ENCODE measurements at regions of chr4 and their contacts with region 1.

Region 1: DNA sequence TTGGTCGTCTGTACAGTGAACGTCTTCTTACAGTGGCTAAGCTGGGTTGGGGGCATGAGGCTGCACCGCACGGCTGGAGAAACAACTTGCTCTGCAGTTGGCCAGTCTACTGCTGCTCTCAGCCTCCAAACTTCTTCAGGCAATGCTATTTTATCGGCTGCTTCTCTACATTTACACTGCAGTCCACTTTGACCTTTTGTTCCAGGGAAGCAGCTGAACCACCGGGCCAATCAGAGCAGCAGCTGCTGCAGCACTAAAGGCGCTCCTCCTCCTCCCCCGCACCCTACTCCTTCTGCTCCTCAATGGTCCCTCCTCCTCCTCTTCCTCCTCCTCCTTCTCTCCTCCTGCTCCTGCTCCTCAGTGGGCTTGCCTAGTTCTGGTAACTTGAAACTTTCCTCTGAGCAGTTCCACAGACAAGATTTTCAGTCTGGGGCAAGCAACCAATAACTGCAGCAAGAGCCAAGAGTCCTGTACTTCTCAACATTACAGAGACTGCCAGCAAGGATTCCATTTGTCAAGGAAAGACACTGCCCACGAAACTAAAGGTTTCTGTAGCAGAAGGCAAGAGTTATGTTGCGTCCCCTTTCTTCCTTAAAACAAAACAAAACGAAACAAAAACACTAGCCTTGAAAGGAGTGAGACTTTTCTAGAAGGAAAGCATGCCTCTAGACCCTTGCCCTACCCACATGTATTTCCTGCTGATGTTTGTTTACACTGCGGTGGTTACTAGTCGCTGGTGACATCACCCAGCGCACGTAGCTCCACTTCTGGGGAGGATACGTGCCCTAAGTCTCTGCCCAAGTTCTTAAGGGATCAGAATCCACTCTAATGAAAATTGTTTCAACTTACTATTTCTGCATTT is 125.7 kb upstream of the NAP1L5 start:
- DNase-seq: peak; percentile 23 to 90 (median 84)
- ATAC-seq: peak; percentile 96
- H3K4me3 ChIP-seq: peak overlapping the region; percentile 62
- H3K4me3 Mint-ChIP-seq: peak overlapping the region; percentile 88 to 99 (median 96)
- H3K27ac ChIP-seq: peak overlapping the region; percentile 83
- H3K27ac Mint-ChIP-seq: peak overlapping the region; percentile 88 to 99 (median 98)
- H3K4me1 ChIP-seq: peaks cover 0 to 13% of the 10 kb centered on the region in 2 donors
- H3K4me1 Mint-ChIP-seq: peaks cover 0 to 46% (median 37%) of the 10 kb centered on the region in 7 donors
- H3K27me3 ChIP-seq: no peaks in the 10 kb centered on the region
- H3K27me3 Mint-ChIP-seq: no peaks in the 10 kb centered on the region

Region 2: DNA sequence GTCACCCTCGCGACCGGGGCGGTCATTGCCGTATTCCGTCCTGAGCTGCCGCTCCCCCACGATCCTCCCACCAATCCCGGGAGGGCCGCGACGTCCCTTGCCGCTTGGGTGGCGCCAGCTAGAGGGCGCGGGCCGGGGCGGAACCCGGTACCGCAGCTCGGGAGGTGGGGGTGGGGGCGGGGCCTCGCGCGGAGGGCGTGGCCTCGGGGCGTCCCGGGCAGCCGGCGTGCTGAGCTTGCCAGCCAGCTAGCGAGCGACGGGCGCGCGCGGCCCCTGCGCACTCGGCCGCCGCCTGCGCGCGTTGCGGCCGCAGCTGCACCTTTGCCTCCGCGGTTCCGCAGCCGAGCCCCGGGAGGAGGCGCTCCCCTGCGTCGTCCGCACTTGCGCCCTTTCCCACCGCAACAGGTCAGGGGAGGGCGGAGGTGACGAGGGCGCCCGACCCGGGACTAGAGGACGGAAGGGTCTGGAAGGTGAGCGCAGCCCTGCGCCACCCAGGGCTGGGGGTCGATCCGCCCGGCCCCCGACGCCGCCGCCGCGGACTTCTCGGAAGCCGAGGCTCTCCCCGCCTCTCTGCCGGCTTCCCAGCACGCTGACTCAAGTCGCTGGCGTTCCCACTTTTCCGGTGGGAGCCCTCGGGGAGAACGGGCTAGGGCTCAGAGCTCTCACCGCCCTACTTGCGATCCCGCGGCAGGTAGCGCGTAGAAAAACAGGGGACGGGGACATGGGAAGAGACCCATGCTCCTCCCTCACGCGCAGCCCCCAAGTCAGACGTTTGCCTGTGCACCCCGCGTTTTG is 1888.3 kb before region 1 on chr4 and contains the start of gene AFF1:
- CTCF ChIA-PET with region 1: no interaction called
- POLR2A ChIA-PET with region 1: no interaction called
- intact Hi-C with region 1: loop called in 1 of 2 experiments (anchors 10 kb)
- DNase-seq: peak; percentile 74 to 91 (median 81)
- ATAC-seq: peak; percentile 90
- H3K4me3 ChIP-seq: peak within 1 kb of the TSS; percentile 91
- H3K4me3 Mint-ChIP-seq: peak within 1 kb of the TSS; percentile 92 to 97 (median 94)
- H3K27ac ChIP-seq: peak within 1 kb of the TSS; percentile 90
- H3K27ac Mint-ChIP-seq: peak within 1 kb of the TSS; percentile 91 to 97 (median 96)
- H3K4me1 ChIP-seq: peaks cover 29% of the 10 kb centered on the region in 2 donors
- H3K4me1 Mint-ChIP-seq: peaks cover 37 to 61% (median 53%) of the 10 kb centered on the region in 7 donors
- H3K27me3 ChIP-seq: no peaks in the 10 kb centered on the region
- H3K27me3 Mint-ChIP-seq: no peaks in the 10 kb centered on the region
- total RNA-seq, gene AFF1: 65.8 to 88.6 (median 78.7) TPM

Region 3: DNA sequence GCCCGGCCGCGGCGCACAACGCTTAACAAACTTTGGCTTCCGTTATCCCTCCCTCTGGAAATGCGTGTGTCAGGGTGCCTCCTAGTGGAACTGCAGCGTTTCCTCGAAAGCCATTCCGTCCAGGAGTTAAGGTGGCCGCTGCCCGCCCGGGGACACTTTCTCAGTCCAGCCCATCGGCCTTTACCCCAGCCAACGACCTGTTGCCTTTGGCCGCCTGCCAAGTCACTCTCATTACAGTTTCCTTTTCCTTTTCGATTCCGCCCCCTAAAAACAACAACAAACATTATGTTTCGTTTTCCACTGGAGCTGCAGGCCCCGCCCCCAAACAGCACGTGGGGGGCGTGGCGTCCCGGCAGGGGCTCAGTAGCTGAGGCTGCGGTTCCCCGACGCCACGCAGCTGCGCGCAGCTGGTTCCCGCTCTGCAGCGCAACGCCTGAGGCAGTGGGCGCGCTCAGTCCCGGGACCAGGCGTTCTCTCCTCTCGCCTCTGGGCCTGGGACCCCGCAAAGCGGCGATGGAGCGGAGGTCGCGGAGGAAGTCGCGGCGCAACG is 366.5 kb before region 1 on chr4 and contains the start of gene HERC5:
- CTCF ChIA-PET with region 1: no interaction called
- POLR2A ChIA-PET with region 1: no interaction called
- intact Hi-C with region 1: loop called (anchors 1 kb)
- DNase-seq: peak; percentile 90 to 94 (median 92)
- ATAC-seq: peak; percentile 98
- H3K4me3 ChIP-seq: peak within 1 kb of the TSS; percentile 100
- H3K4me3 Mint-ChIP-seq: peak within 1 kb of the TSS; percentile 87 to 100 (median 98)
- H3K27ac ChIP-seq: peak within 1 kb of the TSS; percentile 72
- H3K27ac Mint-ChIP-seq: peak within 1 kb of the TSS; percentile 94 to 100 (median 99)
- H3K4me1 ChIP-seq: peaks cover 5 to 6% of the 10 kb centered on the region in 2 donors
- H3K4me1 Mint-ChIP-seq: peaks cover 10 to 52% (median 37%) of the 10 kb centered on the region in 7 donors
- H3K27me3 ChIP-seq: no peaks in the 10 kb centered on the region
- H3K27me3 Mint-ChIP-seq: no peaks in the 10 kb centered on the region
- total RNA-seq, gene HERC5: 11.8 to 52.5 (median 14.1) TPM

Region 4: DNA sequence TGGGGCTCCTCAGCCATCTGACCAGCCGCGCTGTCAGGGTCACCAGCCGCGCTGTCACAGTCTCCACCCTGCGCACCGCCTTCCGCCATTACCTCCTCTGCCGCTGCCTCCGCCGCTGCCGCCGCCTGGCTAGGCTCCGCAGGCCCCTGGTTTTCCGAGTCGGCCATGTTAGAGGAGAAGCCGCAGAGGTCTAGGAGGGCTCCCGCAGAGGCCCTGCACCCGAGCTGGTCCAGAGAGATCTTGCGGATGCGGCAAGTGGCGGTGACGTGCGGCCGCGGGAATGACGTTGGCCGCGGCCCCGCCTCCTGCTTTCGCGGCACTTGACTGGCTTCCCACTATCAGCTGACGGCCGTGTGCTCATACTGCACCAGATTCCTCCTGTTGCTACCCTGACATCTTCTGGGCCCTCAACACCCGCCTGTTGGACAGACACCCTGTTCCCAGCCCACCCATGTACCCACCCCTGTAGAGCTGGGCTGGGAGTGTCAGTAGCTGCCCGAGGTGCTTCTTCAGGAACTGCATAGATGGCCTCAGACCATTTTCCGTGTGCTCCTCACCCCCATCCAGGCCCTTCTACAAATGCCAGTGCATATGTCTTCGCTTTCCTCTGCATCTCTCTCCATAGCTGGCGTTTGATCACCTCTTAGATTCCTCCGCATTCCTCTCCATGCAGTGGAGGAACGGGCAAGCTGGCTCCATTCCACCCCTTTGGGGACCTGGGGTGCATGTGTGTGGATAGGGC is 125.5 kb before region 1 on chr4 and contains the start of gene NAP1L5:
- CTCF ChIA-PET with region 1: no interaction called
- POLR2A ChIA-PET with region 1: interaction called, 6 read pairs
- intact Hi-C with region 1: loop called in 1 of 2 experiments (anchors 2 kb)
- DNase-seq: peak; percentile 57 to 88 (median 81)
- ATAC-seq: peak; percentile 95
- H3K4me3 ChIP-seq: peak within 1 kb of the TSS; percentile 68
- H3K4me3 Mint-ChIP-seq: peak within 1 kb of the TSS; percentile 82 to 92 (median 88)
- H3K27ac ChIP-seq: peak within 1 kb of the TSS; percentile 79
- H3K27ac Mint-ChIP-seq: peak within 1 kb of the TSS; percentile 79 to 96 (median 94)
- H3K4me1 ChIP-seq: peaks cover 0 to 13% of the 10 kb centered on the region in 2 donors
- H3K4me1 Mint-ChIP-seq: peaks cover 5 to 35% (median 22%) of the 10 kb centered on the region in 7 donors
- H3K27me3 ChIP-seq: no peaks in the 10 kb centered on the region
- H3K27me3 Mint-ChIP-seq: no peaks in the 10 kb centered on the region
- total RNA-seq, gene NAP1L5: 1.4 to 11.7 (median 4.5) TPM

Region 5: GRCh38 chr4:88949605-88950004 is 126.3 kb after region 1 on chr4:
- CTCF ChIA-PET with region 1: no interaction called
- POLR2A ChIA-PET with region 1: no interaction called
- intact Hi-C with region 1: loop called in 1 of 2 experiments (anchors 1 kb)
- DNase-seq: no peak
- ATAC-seq: no peak
- H3K4me3 ChIP-seq: no peak overlapping the region
- H3K4me3 Mint-ChIP-seq: peak overlapping the region in 5 of 10 donors; percentile 3 to 61 (median 48)
- H3K27ac ChIP-seq: no peak overlapping the region
- H3K27ac Mint-ChIP-seq: peak overlapping the region in 5 of 9 donors; percentile 27 to 77 (median 74)
- H3K4me1 ChIP-seq: no peaks in the 10 kb centered on the region
- H3K4me1 Mint-ChIP-seq: peaks cover 6 to 71% (median 36%) of the 10 kb centered on the region in 7 donors
- H3K27me3 ChIP-seq: no peaks in the 10 kb centered on the region
- H3K27me3 Mint-ChIP-seq: no peaks in the 10 kb centered on the region

Region 6: DNA sequence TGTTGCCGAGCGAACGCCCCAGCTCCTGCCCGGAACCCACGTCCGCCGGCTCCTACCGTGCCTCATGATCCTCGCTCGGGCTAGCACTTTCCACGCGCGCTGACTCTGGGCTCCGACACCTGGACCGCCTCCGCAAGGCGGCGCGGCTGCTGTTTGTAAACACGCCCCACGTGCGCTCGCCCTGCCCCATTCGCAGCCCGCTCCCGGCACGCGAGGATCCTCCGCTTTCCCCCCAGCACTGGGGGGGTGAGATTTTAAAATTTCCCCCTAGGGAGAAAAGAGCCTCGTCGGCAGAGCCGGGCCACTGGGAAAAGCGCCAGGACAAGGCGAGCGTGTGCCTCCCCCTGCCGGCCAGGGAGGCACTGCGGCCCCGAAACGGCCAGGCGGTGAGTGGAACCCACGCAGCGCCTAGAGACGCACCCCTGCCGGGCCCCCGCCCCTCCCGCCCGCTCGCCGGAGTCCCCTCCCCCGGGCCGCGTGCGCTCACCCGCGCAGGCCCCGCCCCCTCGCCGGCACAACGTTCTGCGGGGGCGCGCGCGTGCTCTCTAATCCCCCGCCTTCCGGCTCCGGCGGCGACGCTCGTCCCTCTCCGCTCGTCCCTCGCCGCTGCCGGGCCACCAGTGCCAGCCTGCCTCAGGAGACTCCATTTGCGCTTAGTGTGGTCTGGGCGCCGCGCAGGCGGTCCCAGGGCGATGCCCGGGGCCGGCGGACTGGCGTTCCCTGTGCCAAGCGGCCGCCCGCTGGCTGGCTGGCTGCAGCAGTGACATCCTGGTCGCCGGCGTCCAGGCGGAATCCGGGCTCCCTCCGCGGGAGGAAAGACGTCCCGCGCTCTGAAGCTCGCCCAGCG is 287.9 kb after region 1 on chr4 and contains the start of gene TIGD2:
- CTCF ChIA-PET with region 1: no interaction called
- POLR2A ChIA-PET with region 1: no interaction called
- intact Hi-C with region 1: loop called (anchors 1 kb)
- DNase-seq: peak; percentile 81 to 90 (median 87)
- ATAC-seq: peak; percentile 97
- H3K4me3 ChIP-seq: peak within 1 kb of the TSS; percentile 80
- H3K4me3 Mint-ChIP-seq: peak within 1 kb of the TSS; percentile 84 to 93 (median 90)
- H3K27ac ChIP-seq: peak within 1 kb of the TSS; percentile 81
- H3K27ac Mint-ChIP-seq: peak within 1 kb of the TSS; percentile 80 to 94 (median 89)
- H3K4me1 ChIP-seq: peaks cover 10 to 15% of the 10 kb centered on the region in 2 donors
- H3K4me1 Mint-ChIP-seq: peaks cover 20 to 28% (median 24%) of the 10 kb centered on the region in 7 donors
- H3K27me3 ChIP-seq: no peaks in the 10 kb centered on the region
- H3K27me3 Mint-ChIP-seq: peaks cover 0 to 25% (median 0%) of the 10 kb centered on the region in 5 donors
- total RNA-seq, gene TIGD2: 3.0 to 7.9 (median 5.2) TPM

Region 7: GRCh38 chr4:89307446-89308160 is 484.3 kb after region 1 on chr4 and contains the start of gene GPRIN3:
- CTCF ChIA-PET with region 1: no interaction called
- POLR2A ChIA-PET with region 1: no interaction called
- intact Hi-C with region 1: loop called (anchors 5 kb)
- DNase-seq: peak; percentile 54 to 80 (median 66)
- ATAC-seq: peak; percentile 79
- H3K4me3 ChIP-seq: peak within 1 kb of the TSS; percentile 93
- H3K4me3 Mint-ChIP-seq: peak within 1 kb of the TSS; percentile 80 to 99 (median 94)
- H3K27ac ChIP-seq: peak within 1 kb of the TSS; percentile 81
- H3K27ac Mint-ChIP-seq: peak within 1 kb of the TSS; percentile 83 to 98 (median 90)
- H3K4me1 ChIP-seq: peaks cover 18 to 20% of the 10 kb centered on the region in 2 donors
- H3K4me1 Mint-ChIP-seq: peaks cover 39 to 70% (median 64%) of the 10 kb centered on the region in 7 donors
- H3K27me3 ChIP-seq: no peaks in the 10 kb centered on the region
- H3K27me3 Mint-ChIP-seq: no peaks in the 10 kb centered on the region
- total RNA-seq, gene GPRIN3: 10.2 to 55.5 (median 24.8) TPM

Measured in naive thymus-derived CD4-positive, alpha-beta T cell (primary cell).